Activated CD4-positive, alpha-beta memory T cell treated with anti-CD3 and anti-CD28 coated beads for 36 hours (primary cell): ENCODE measurements at regions of chr10 and their contacts with region 1.

Region 1: DNA sequence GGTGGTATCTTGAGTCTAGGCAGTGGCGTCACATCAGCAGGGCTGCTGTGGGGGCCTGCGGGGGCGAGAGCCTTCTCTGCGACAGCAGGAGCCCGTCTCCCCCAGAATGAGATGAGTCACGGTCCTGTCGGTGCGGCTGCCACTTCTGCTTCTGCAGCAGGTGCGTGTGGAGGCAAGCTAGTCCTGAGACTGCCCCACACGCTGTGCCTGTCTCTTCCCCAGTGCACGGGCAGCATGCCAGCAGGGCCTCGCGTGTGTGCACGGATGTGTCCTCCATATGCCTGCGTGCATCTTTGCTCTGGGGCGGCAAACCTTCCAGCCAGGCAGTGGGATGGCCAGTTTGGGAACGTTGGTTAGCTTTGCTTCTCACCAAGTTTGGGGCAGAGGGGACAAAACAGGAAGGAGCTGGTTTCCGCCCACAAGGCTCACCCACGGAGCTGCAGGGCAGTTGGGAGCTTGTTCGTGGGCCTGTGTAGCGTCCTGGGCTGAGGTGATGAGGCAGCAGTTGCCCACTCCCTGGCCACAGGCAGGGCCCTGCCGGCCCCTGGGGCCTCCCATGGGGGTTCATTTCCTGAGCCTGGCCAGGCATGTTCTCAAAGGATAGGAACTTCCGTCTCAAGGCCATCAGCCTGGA is 60.8 kb upstream of the PPIF start:
- DNase-seq: peak; percentile 93
- H3K4me3 Mint-ChIP-seq: peak overlapping the region; percentile 62
- H3K27ac Mint-ChIP-seq: peak overlapping the region; percentile 94
- H3K4me1 Mint-ChIP-seq: peaks cover 44% of the 10 kb centered on the region
- H3K27me3 Mint-ChIP-seq: no peaks in the 10 kb centered on the region

Region 2: GRCh38 chr10:79221110-79222051 is 65.1 kb before region 1 on chr10:
- CTCF ChIA-PET with region 1: no interaction called
- POLR2A ChIA-PET with region 1: no interaction called
- intact Hi-C with region 1: no loop called
- DNase-seq: no peak
- H3K4me3 Mint-ChIP-seq: no peak overlapping the region
- H3K27ac Mint-ChIP-seq: no peak overlapping the region
- H3K4me1 Mint-ChIP-seq: no peaks in the 10 kb centered on the region
- H3K27me3 Mint-ChIP-seq: no peaks in the 10 kb centered on the region

Region 3: DNA sequence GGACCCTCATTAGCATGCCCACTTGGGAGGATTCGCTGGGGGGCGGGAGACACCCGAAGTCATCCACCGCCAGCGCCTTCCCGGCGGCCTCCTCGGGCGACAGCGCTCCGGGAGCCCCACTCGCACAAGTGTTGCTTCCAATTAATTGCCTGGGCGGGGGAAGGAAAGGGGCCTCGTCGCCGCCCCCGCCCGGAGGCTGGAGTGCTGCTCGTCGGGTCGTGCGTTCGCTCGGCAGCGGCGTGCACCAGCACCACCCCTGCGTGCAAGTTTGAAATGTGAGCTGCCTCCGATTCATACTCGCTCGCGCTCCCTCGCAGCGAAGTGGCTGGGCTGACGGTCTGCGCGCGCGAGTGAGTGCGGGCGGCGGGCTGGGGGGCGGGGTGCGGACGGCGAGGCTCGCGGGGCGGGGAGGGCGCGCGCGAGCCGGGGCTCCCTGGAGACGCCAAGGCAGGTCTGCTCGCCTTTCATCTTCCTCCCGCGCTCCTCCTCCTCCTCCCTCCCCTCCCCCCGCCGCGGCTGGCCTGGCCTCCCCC is 43.7 kb before region 1 on chr10:
- CTCF ChIA-PET with region 1: interaction called, 3 read pairs
- POLR2A ChIA-PET with region 1: interaction called, 19 read pairs
- intact Hi-C with region 1: loop called (anchors 1 kb)
- DNase-seq: peak; percentile 79
- H3K4me3 Mint-ChIP-seq: peak overlapping the region; percentile 76
- H3K27ac Mint-ChIP-seq: peak overlapping the region; percentile 91
- H3K4me1 Mint-ChIP-seq: peaks cover 55% of the 10 kb centered on the region
- H3K27me3 Mint-ChIP-seq: no peaks in the 10 kb centered on the region

Region 4: GRCh38 chr10:79249186-79250121 is 37.0 kb before region 1 on chr10:
- CTCF ChIA-PET with region 1: interaction called, 4 read pairs
- POLR2A ChIA-PET with region 1: interaction called, 19 read pairs
- intact Hi-C with region 1: loop called (anchors 1 kb)
- DNase-seq: peak; percentile 59
- H3K4me3 Mint-ChIP-seq: no peak overlapping the region
- H3K27ac Mint-ChIP-seq: peak overlapping the region; percentile 69
- H3K4me1 Mint-ChIP-seq: peaks cover 62% of the 10 kb centered on the region
- H3K27me3 Mint-ChIP-seq: no peaks in the 10 kb centered on the region

Region 5: DNA sequence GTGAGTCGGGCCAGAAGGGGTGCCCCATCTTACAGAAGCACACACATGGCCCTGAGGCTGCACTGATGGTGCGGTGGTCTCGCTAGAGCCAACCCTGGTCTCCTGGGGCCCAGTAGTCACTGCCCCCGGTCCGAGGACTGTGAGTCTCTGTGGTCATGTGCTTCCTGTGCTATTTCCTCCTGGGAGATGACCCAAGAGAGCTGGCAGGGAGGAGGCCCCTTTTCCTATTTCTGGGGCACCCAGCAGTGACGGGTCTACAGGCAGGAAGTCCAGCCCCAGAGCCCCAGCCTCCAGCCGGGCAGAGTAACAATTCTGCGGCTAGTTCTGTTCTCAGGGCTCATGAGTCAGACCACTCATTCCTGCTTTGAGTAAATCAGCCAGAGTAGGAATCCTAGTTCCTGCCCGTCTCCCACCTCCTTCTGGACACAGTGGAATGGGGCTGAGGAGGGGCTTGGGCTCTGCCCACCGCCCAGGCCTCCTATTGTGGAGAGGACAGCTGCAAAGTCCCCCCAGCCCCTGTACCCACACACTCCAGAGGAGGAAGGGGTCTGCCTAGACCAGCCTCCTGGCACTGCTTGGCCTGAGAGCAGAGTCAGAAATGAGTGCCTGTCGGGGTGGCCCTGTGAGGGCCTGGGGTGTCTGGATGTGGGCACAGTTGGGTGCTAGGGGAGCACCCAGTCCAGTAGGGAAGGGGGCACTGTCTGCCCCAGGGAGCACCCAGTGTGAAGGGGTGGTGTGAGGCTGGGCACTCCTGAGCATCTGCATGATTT is 19.7 kb before region 1 on chr10:
- CTCF ChIA-PET with region 1: no interaction called
- POLR2A ChIA-PET with region 1: interaction called, 3 read pairs
- intact Hi-C with region 1: loop called (anchors 1 kb)
- DNase-seq: peak; percentile 67
- H3K4me3 Mint-ChIP-seq: no peak overlapping the region
- H3K27ac Mint-ChIP-seq: peak overlapping the region; percentile 4
- H3K4me1 Mint-ChIP-seq: peaks cover 23% of the 10 kb centered on the region
- H3K27me3 Mint-ChIP-seq: no peaks in the 10 kb centered on the region

Region 6: GRCh38 chr10:79316671-79317431 is 30.4 kb after region 1 on chr10:
- CTCF ChIA-PET with region 1: no interaction called
- POLR2A ChIA-PET with region 1: interaction called, 8 read pairs
- intact Hi-C with region 1: loop called (anchors 1 kb)
- DNase-seq: peak; percentile 55
- H3K4me3 Mint-ChIP-seq: peak overlapping the region; percentile 53
- H3K27ac Mint-ChIP-seq: peak overlapping the region; percentile 80
- H3K4me1 Mint-ChIP-seq: peaks cover 62% of the 10 kb centered on the region
- H3K27me3 Mint-ChIP-seq: no peaks in the 10 kb centered on the region

Region 7: DNA sequence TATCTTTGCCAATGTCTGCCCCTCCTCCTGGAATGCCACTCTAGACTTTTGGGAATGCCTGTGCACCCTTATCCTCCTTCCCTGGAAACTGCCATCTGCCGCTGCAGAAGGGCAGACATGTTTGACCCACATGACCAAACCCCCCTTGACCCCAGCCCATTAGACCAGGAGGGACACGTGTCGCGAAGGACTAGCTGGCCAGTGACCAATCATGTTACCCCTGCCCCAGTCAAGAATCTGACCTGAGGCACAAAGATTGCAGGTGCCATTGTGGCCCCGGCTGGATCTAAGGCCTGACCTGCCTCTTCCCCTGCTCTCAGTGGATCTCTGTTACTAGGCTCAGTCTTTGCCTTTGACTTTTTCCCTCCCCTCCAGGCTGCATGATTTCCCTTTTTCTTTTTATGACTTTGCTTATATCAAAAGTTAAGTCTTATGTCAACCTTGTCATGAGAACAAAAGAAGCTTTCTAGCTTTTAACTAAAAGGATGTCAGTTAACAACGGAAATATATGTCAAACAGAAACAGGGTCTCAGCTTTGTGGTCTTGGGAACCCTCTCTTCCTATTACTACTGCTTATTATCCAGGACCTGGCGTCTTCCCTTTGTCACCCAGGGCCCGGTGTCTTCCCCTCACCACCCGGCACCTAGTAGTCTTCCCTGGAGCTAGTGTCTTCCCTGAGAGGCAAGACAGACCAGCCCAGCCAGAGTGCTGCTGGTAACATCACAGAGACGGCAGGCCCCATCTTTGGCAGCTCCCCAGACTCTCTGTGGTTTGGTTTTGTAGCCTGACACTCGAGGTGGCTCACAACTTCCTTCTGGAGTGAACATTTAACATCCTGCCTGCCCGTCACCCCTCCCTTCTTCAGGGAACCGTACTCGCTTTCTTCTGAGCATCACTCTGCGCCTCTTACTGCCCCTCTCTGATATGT is 36.4 kb after region 1 on chr10:
- CTCF ChIA-PET with region 1: no interaction called
- POLR2A ChIA-PET with region 1: interaction called, 8 read pairs
- intact Hi-C with region 1: loop called (anchors 1 kb)
- DNase-seq: peak; percentile 91
- H3K4me3 Mint-ChIP-seq: peak overlapping the region; percentile 39
- H3K27ac Mint-ChIP-seq: peak overlapping the region; percentile 92
- H3K4me1 Mint-ChIP-seq: peaks cover 69% of the 10 kb centered on the region
- H3K27me3 Mint-ChIP-seq: no peaks in the 10 kb centered on the region

Region 8: GRCh38 chr10:79331709-79332108 is 45.3 kb after region 1 on chr10:
- CTCF ChIA-PET with region 1: interaction called, 3 read pairs
- POLR2A ChIA-PET with region 1: no interaction called
- intact Hi-C with region 1: loop called (anchors 1 kb)
- DNase-seq: peak; percentile 95
- H3K4me3 Mint-ChIP-seq: peak overlapping the region; percentile 6
- H3K27ac Mint-ChIP-seq: peak overlapping the region; percentile 89
- H3K4me1 Mint-ChIP-seq: peaks cover 41% of the 10 kb centered on the region
- H3K27me3 Mint-ChIP-seq: no peaks in the 10 kb centered on the region